BJ (cell line): ENCODE measurements at regions of chr3 and their contacts with region 1.

Region 1: GRCh38 chr3:12782172-12782815 is 14.2 kb upstream of the CAND2 start:
- DNase-seq: no peak
- H3K4me3 ChIP-seq: no peak overlapping the region
- H3K27me3 ChIP-seq: peaks cover 5% of the 10 kb centered on the region
- CTCF ChIP-seq: no peak

Region 2: DNA sequence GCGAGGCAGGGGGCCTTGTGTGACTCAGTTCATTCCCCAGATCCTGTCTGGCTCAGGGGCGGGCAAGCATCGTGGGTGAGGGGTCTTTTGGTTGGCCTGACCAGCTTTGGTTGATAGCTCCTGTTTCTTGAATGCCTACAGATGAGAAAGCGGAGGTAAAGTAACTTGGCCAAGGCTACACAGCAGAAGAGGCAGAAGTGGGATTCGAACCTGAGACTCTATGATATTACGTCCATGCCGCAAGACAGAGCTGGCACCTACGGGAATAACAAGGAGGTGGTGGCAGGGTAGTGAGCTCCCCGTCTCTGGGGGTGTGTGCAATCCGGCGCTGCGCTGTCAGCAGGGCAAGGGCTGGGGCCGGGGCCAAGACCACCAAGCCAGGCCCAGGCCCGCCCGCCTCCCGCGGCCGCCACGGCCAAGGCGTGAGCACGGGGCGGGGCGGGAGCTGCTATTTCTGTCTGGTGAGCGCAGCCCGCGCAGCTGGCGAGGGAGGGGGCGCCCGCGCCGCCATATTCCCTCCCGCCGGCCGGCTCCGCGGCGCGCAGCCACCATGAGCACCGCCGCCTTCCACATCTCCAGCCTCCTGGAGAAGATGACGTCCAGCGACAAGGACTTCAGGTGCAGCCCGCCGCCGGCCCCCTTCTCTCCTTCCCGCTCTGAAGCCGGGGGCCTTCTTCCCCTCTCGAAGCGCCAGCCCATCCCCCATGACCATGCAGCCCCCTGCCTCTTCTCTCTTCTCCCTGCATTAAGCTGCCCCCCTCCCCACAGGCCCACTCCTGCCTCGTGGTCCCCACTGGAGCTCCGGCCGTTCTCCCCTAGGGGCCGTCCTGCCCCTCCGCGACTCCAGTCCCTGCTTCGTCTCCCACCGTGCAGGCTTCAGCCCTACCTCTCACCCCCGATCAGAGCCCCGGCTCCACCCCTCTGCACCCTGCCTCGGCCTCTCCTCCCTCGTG is 14.2 kb after region 1 on chr3 and contains the start of gene CAND2:
- CTCF ChIA-PET with region 1: interaction called, 41 read pairs
- POLR2A ChIA-PET with region 1: no interaction called
- DNase-seq: no peak
- H3K4me3 ChIP-seq: peak within 1 kb of the TSS; percentile 46
- H3K27me3 ChIP-seq: no peaks in the 10 kb centered on the region; the same call in 1 of the 2 replicates
- CTCF ChIP-seq: no peak
- polyA plus RNA-seq, gene CAND2: 1.3 and 2.3 TPM in 2 replicates

Region 3: DNA sequence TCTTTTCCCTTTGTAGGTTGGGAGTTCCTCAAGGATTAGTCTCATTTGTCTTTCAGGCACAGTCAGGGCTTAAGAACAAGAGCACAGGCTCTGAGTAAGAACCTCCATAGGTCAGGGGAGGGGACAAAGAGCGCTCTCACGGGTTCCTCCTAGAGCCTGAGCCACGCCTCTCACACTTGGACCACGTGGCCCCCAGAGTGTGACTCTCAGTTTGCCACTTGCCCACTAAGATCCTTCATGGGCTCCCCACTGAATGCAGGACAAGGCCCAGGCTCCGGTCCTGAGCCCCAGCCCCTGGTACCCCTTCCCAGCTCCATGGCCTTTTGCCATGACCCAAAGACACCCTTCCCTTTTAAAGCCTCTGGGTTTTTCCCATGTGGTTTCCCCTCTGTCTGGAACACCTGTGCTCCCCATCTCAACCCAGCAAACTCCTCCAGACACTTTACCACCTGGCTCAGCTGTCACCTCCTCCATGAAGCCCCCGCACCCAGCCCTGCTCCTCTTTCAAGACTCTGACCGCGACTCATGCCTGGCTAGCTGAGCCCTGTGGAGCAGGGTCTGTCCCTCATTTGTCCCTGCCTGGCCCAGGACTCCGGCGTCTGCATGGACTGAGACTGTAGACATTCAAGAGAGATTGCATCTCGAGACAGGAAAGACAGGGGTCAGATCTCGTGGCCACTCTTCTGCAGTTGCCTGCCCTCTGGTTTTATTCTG is 258.2 kb after region 1 on chr3:
- CTCF ChIA-PET with region 1: no interaction called
- POLR2A ChIA-PET with region 1: no interaction called
- DNase-seq: no peak
- H3K4me3 ChIP-seq: no peak overlapping the region
- H3K27me3 ChIP-seq: peaks cover 6% of the 10 kb centered on the region
- CTCF ChIP-seq: no peak